Gastrocnemius medialis (tissue), 4 donors: ENCODE measurements at regions of chr7 and their contacts with region 1.

Region 1: GRCh38 chr7:27160546-27161213 is 4.2 kb upstream of the HOXA7 start:
- DNase-seq: peak in 1 of 2 donors; percentile 85
- ATAC-seq: peak; percentile 32 to 47
- H3K4me3 ChIP-seq: peak overlapping the region; percentile 60 to 80 (median 72)
- H3K27ac ChIP-seq: peak overlapping the region; percentile 65 to 88 (median 81)
- H3K4me1 ChIP-seq: peaks cover 12 to 23% of the 10 kb centered on the region in 2 donors
- H3K27me3 ChIP-seq: no peaks in the 10 kb centered on the region
- CTCF ChIP-seq: peak; percentile 99 to 100 (median 100)
- POLR2A ChIP-seq: no peak

Region 2: DNA sequence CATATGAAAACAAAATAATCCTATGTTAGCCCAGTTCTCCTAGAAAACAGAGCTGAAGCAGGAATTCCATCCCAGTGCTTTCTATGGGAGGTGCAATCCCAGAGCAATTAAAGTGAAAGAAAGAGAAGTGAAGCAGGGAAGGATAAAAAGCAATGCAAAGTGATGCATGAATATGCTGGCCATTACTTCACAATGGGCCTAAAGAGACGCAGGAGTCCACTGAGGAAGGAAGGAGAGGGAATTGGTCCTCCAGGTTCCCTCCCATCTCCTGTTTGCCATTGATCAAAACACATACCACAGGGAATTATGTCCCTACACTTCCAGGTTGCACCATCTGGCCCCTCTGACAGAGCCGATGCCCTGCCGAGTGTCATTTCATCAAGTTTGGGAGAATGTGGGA is 1400.9 kb before region 1 on chr7:
- in situ Hi-C with region 1: no loop called
- intact Hi-C with region 1: loop called (anchors 10 kb)
- DNase-seq: no peak
- ATAC-seq: no peak
- H3K4me3 ChIP-seq: no peak overlapping the region
- H3K27ac ChIP-seq: peak overlapping the region in 1 of 4 donors; percentile 94
- H3K4me1 ChIP-seq: peaks cover 24 to 56% of the 10 kb centered on the region in 2 donors
- H3K27me3 ChIP-seq: no peaks in the 10 kb centered on the region
- CTCF ChIP-seq: no peak
- POLR2A ChIP-seq: no peak

Region 3: DNA sequence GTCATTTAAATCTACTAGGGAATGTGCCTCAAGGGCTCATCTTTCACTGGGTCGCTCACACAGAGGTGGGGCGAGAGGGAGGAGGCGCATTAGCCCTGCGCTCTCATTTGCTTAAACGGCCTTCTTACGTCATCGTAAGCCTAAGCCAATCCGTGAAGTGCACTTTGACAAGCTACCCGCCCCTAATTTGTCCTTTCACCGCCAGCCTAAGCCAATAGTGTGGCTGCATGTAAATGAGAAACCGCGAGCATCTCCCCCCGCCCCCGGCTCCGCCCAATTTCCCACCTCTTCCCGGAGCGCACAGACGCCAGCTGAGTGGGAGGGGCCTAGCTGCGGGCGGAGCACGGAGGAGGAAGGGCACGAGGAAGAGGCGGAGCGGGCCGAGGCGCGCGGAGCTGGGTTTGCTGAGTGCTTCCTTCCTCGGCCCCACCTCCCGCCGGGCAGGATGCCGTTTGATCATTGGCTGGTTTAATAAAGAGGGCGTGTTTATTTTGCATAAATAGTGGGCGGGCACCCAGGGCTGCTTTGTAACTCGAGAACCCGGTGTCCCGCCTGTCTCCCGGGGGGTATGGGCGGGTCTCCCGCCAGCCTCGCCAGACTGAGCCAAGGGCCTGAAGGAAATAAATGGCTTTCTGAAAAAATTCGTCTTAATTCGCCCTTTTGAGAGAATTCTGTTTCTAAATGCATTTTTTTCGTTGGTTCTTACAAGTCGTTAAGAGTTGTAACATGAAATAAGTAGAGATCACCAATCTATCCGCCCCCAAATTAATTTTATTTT is 1298.2 kb before region 1 on chr7:
- in situ Hi-C with region 1: loop called in 2 of 4 experiments (anchors 5 to 10 kb)
- intact Hi-C with region 1: no loop called
- DNase-seq: peak; percentile 98 to 100
- ATAC-seq: peak; percentile 94 to 95
- H3K4me3 ChIP-seq: peak overlapping the region; percentile 41 to 49 (median 44)
- H3K27ac ChIP-seq: peak overlapping the region; percentile 66 to 78 (median 77)
- H3K4me1 ChIP-seq: peaks cover 11 to 16% of the 10 kb centered on the region in 2 donors
- H3K27me3 ChIP-seq: peaks cover 38 to 48% (median 42%) of the 10 kb centered on the region in 3 donors
- CTCF ChIP-seq: no peak
- POLR2A ChIP-seq: peak in 1 of 2 donors; percentile 15

Region 4: DNA sequence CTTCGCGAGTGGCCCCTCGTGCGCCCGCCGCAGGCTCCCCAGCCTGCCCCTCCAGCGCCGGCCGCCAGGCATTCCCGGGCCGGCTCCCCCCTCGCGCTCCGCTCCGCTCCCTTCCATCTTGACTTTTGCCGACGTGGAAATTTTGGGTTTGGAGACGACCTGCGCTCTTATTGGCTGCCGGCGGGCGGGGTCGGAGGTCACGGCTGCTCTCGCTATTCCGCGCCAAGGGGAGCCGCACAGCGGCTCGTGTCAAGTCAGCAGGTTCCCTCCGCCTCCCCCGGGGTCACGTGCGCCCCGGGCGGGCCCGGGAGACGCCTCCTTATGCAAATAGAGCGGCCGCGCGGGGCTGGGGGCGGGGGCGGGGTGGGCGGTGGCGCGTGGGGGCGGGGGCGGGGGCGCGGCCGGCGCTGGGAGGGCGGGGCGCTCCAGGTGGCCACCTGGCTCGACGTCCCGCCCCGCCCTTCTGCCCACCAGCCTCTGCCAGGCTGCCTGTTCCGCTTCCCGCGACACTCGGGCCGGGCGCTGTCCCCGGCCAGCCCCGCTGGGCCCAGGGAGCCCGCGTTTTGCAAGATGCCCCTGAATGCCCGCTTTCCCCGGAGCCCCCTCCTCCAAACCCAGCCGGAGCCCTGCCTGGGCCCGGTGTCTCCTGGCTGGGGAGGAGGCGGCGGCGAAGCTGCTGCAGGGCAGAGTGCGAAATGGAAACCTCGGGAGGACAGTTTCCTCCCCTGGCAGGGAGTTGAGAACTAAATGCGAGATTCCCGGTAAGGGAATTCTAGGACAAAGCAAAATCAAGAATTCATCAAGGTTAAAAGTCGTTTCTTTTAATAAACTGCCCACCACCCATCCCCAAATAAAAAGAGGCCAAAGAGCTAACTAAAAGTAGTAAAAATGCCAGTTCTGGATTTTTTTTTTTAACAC is 1209.4 kb before region 1 on chr7:
- in situ Hi-C with region 1: no loop called
- intact Hi-C with region 1: loop called (anchors 5 kb)
- DNase-seq: peak; percentile 82 to 86
- ATAC-seq: peak; percentile 86 to 90
- H3K4me3 ChIP-seq: peak overlapping the region; percentile 59 to 88 (median 64)
- H3K27ac ChIP-seq: peak overlapping the region; percentile 68 to 76 (median 72)
- H3K4me1 ChIP-seq: peaks cover 5 to 15% of the 10 kb centered on the region in 2 donors
- H3K27me3 ChIP-seq: no peaks in the 10 kb centered on the region
- CTCF ChIP-seq: no peak
- POLR2A ChIP-seq: peak; percentile 59 to 65

Region 5: GRCh38 chr7:26686448-26686981 is 474.2 kb before region 1 on chr7:
- in situ Hi-C with region 1: no loop called
- intact Hi-C with region 1: loop called (anchors 1 kb)
- DNase-seq: no peak
- ATAC-seq: no peak
- H3K4me3 ChIP-seq: no peak overlapping the region
- H3K27ac ChIP-seq: no peak overlapping the region
- H3K4me1 ChIP-seq: peaks cover 0 to 6% of the 10 kb centered on the region in 2 donors
- H3K27me3 ChIP-seq: no peaks in the 10 kb centered on the region
- CTCF ChIP-seq: peak; percentile 51 to 73 (median 57)
- POLR2A ChIP-seq: no peak

Region 6: GRCh38 chr7:26853788-26854393 is 306.8 kb before region 1 on chr7:
- in situ Hi-C with region 1: no loop called
- intact Hi-C with region 1: loop called (anchors 1 kb)
- DNase-seq: no peak
- ATAC-seq: peak; percentile 86 to 93
- H3K4me3 ChIP-seq: no peak overlapping the region
- H3K27ac ChIP-seq: no peak overlapping the region
- H3K4me1 ChIP-seq: no peaks in the 10 kb centered on the region
- H3K27me3 ChIP-seq: peaks cover 35 to 53% (median 52%) of the 10 kb centered on the region in 3 donors
- CTCF ChIP-seq: peak; percentile 40 to 73 (median 63)
- POLR2A ChIP-seq: no peak

Region 7: GRCh38 chr7:27080844-27081436 is 79.7 kb before region 1 on chr7:
- in situ Hi-C with region 1: no loop called
- intact Hi-C with region 1: no loop called
- DNase-seq: no peak
- ATAC-seq: no peak
- H3K4me3 ChIP-seq: no peak overlapping the region
- H3K27ac ChIP-seq: no peak overlapping the region
- H3K4me1 ChIP-seq: no peaks in the 10 kb centered on the region
- H3K27me3 ChIP-seq: no peaks in the 10 kb centered on the region
- CTCF ChIP-seq: no peak
- POLR2A ChIP-seq: no peak

Region 8: DNA sequence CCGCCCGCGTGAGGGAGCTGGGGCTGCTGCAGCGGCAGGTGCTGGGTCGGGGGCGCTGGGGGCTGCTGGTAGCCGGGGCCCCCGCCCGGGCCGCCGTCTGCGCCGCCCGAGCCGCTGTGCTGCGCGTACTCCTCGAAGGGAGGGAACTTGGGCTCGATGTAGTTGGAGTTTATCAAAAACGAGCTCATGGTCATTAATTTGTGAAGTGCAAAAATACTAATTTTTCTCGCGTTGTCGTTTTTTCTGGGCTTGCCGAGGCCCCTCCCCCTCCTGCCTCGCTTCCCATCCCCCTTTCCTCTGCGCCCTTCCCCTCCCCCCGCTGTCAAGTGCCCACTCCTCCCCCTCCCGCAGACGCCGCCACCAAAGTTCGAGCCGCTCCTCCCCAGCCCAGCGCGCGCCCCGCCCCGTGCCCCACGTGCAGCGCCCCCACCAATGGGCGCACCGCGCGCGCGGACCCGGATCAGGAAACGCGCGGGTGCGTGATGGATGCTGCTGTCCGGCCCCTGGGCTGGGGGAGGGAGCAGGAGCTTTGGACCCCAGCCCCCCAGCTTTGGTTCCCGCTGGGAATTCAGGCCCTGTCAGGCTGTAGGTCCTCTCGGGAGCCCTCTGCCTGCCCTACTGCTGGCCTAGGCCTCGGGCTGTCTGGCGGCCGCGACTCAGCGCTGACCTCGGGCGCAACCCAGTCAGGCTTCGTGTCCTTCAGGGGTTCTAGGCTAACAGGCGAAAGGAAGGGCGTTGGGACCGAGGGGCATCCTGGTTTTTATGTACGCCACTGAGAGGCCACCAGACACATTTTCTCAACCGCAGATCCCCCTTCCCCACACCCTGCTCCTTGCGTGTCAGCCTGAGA is 29.9 kb before region 1 on chr7 and contains the start of gene HOXA4:
- in situ Hi-C with region 1: no loop called
- intact Hi-C with region 1: loop called (anchors 5 kb)
- DNase-seq: peak; percentile 93 to 94
- ATAC-seq: peak; percentile 71 to 90
- H3K4me3 ChIP-seq: peak within 1 kb of the TSS; percentile 89 to 94 (median 90)
- H3K27ac ChIP-seq: peak within 1 kb of the TSS; percentile 95 to 97 (median 96)
- H3K4me1 ChIP-seq: peaks cover 58 to 68% of the 10 kb centered on the region in 2 donors
- H3K27me3 ChIP-seq: no peaks in the 10 kb centered on the region
- CTCF ChIP-seq: no peak
- POLR2A ChIP-seq: peak; percentile 90 to 96
- total RNA-seq, gene HOXA4: 1.7 to 4.2 (median 2.9) TPM